ENCODE measurements at regions of chr18 and their contacts with region 1.

Region 1: GRCh38 chr18:63539904-63540510 is 2.2 kb upstream of the SERPINB12 start:
- DNase-seq: no peak
- ATAC-seq: no peak
- H3K4me3 ChIP-seq: no peak overlapping the region
- H3K27ac ChIP-seq: no peak overlapping the region
- H3K4me1 ChIP-seq: no peaks in the 10 kb centered on the region
- H3K27me3 ChIP-seq: no peaks in the 10 kb centered on the region; a peak in 1 of 4 replicates
- CTCF ChIP-seq: no peak
- EP300 ChIP-seq: no peak
- POLR2A ChIP-seq: no peak
- RAD21 ChIP-seq: no peak

Region 2: GRCh38 chr18:63603772-63604171 is 63.8 kb after region 1 on chr18:
- CTCF ChIA-PET with region 1: no interaction called
- POLR2A ChIA-PET with region 1: no interaction called
- RAD21 ChIA-PET with region 1: no interaction called
- SMC1A ChIA-PET with region 1: no interaction called
- in situ Hi-C with region 1: loop called (anchors 10 kb)
- intact Hi-C with region 1: no loop called
- DNase-seq: peak; percentile 42
- ATAC-seq: peak; percentile 94
- H3K4me3 ChIP-seq: no peak overlapping the region
- H3K27ac ChIP-seq: peak overlapping the region; percentile 4; the same call in 1 of the 2 replicates
- H3K4me1 ChIP-seq: peaks cover 9% of the 10 kb centered on the region; the same call in 1 of the 2 replicates
- H3K27me3 ChIP-seq: no peaks in the 10 kb centered on the region
- CTCF ChIP-seq: no peak
- EP300 ChIP-seq: no peak
- POLR2A ChIP-seq: no peak
- RAD21 ChIP-seq: no peak